ENCODE measurements at regions of chr17 and their contacts with region 1.

Region 1: GRCh38 chr17:74736513-74737298 is at the start of gene RAB37:
- DNase-seq: no peak
- ATAC-seq: peak; percentile 67
- H3K4me3 ChIP-seq: peak within 1 kb of the TSS; percentile 69
- H3K27ac ChIP-seq: peak within 1 kb of the TSS; percentile 47
- H3K4me1 ChIP-seq: peaks cover 32% of the 10 kb centered on the region
- H3K27me3 ChIP-seq: no peaks in the 10 kb centered on the region
- CTCF ChIP-seq: peak; percentile 64 to 76 (median 67); a peak in 5 of 6 replicates
- EP300 ChIP-seq: no peak
- POLR2A ChIP-seq: peak; percentile 31; the same call in 1 of the 2 replicates
- RAD21 ChIP-seq: peak; percentile 76
- polyA plus RNA-seq, gene RAB37: 0.48 to 0.97 TPM

Region 2: DNA sequence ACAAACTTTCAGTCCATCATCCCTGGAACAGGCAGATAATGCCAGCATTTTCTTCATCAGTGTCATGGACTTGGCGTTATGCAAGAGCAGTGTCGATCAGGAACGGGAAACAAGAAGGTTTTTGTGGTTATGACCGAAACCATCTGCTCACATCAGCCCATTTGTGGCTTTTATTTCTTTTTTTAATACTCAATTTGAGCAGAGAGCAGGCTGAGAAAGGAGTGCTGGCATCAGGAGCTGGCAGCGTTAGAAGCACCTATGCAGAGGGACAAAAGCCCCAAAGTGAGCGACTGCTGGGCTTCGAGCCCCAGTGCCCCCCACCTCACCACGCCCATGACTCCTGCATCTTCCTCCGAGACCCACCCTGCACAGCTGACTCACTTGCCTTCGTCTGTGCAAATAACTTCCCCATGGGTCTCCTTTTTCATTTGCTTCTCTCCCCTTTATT is 97.0 kb before region 1 on chr17:
- CTCF ChIA-PET with region 1: interaction called, 10 read pairs
- POLR2A ChIA-PET with region 1: interaction called, 6 read pairs
- RAD21 ChIA-PET with region 1: interaction called, 10 read pairs
- SMC1A ChIA-PET with region 1: interaction called, 5 read pairs
- in situ Hi-C with region 1: no loop called
- intact Hi-C with region 1: no loop called
- DNase-seq: peak; percentile 42
- ATAC-seq: peak; percentile 58
- H3K4me3 ChIP-seq: no peak overlapping the region
- H3K27ac ChIP-seq: no peak overlapping the region
- H3K4me1 ChIP-seq: peaks cover 35% of the 10 kb centered on the region
- H3K27me3 ChIP-seq: peaks cover 0 to 2% of the 10 kb centered on the region in 2 experiments; a peak in 2 of 4 replicates
- CTCF ChIP-seq: no peak
- EP300 ChIP-seq: no peak
- POLR2A ChIP-seq: no peak
- RAD21 ChIP-seq: no peak

Region 3: DNA sequence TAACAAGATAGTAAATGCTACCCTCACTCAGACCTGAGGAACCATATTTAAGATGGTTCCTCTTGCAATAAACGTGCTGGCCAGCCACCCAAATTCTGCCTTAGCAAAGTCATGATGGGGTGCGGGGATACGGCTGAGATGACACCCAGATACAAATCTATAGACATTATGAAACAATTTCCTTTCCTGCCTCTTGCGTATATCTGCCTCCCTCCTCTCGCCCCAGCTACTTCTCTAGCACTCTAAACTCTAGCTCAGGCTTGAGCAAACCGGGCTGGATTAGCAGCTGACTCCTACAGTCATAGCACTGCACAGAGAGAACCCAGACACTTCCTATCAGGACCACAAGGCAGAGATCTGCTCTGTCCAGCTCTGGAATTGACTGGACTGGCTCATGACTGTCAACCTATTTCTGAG is 46.3 kb before region 1 on chr17:
- CTCF ChIA-PET with region 1: interaction called, 61 read pairs
- POLR2A ChIA-PET with region 1: interaction called, 5 read pairs
- RAD21 ChIA-PET with region 1: interaction called, 25 read pairs
- SMC1A ChIA-PET with region 1: interaction called, 39 read pairs
- in situ Hi-C with region 1: no loop called
- intact Hi-C with region 1: loop called (anchors 5 kb)
- DNase-seq: no peak
- ATAC-seq: no peak
- H3K4me3 ChIP-seq: no peak overlapping the region
- H3K27ac ChIP-seq: no peak overlapping the region
- H3K4me1 ChIP-seq: peaks cover 21% of the 10 kb centered on the region
- H3K27me3 ChIP-seq: no peaks in the 10 kb centered on the region; a peak in 1 of 4 replicates
- CTCF ChIP-seq: no peak
- EP300 ChIP-seq: no peak
- POLR2A ChIP-seq: no peak
- RAD21 ChIP-seq: no peak

Region 4: DNA sequence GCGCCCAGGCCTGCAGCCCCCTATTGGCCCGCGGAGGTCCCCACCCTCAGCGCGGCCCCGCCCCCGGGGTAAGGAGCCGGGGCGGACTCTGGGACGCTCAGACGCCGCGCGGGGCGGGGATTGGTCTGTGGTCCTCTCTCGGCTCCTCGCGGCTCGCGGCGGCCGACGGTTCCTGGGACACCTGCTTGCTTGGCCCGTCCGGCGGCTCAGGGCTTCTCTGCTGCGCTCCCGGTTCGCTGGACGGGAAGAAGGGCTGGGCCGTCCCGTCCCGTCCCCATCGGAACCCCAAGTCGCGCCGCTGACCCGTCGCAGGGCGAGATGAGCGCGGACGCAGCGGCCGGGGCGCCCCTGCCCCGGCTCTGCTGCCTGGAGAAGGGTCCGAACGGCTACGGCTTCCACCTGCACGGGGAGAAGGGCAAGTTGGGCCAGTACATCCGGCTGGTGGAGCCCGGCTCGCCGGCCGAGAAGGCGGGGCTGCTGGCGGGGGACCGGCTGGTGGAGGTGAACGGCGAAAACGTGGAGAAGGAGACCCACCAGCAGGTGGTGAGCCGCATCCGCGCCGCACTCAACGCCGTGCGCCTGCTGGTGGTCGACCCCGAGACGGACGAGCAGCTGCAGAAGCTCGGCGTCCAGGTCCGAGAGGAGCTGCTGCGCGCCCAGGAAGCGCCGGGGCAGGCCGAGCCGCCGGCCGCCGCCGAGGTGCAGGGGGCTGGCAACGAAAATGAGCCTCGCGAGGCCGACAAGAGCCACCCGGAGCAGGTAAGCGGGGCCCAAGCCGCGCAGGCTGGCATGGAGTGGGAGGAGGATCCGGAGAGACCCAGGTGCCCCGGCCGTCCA is 12.0 kb after region 1 on chr17 and contains the start of gene NHERF1:
- CTCF ChIA-PET with region 1: interaction called, 43 read pairs
- POLR2A ChIA-PET with region 1: interaction called, 22 read pairs
- RAD21 ChIA-PET with region 1: interaction called, 11 read pairs
- SMC1A ChIA-PET with region 1: interaction called, 15 read pairs
- in situ Hi-C with region 1: no loop called
- intact Hi-C with region 1: no loop called
- DNase-seq: peak; percentile 60
- ATAC-seq: peak; percentile 96
- H3K4me3 ChIP-seq: peak within 1 kb of the TSS; percentile 96
- H3K27ac ChIP-seq: peak within 1 kb of the TSS; percentile 64
- H3K4me1 ChIP-seq: peaks cover 6% of the 10 kb centered on the region
- H3K27me3 ChIP-seq: no peaks in the 10 kb centered on the region
- CTCF ChIP-seq: peak; percentile 10 to 19 (median 14); a peak in 1 of 6 replicates
- EP300 ChIP-seq: no peak
- POLR2A ChIP-seq: peak; percentile 99
- RAD21 ChIP-seq: no peak
- polyA plus RNA-seq, gene NHERF1: 13.4 to 14.3 TPM

Region 5: GRCh38 chr17:74790161-74791054 is 53.7 kb after region 1 on chr17:
- CTCF ChIA-PET with region 1: interaction called, 11 read pairs
- POLR2A ChIA-PET with region 1: interaction called, 5 read pairs
- RAD21 ChIA-PET with region 1: interaction called, 4 read pairs
- SMC1A ChIA-PET with region 1: interaction called, 8 read pairs
- in situ Hi-C with region 1: no loop called
- intact Hi-C with region 1: no loop called
- DNase-seq: no peak
- ATAC-seq: no peak
- H3K4me3 ChIP-seq: no peak overlapping the region
- H3K27ac ChIP-seq: no peak overlapping the region
- H3K4me1 ChIP-seq: peaks cover 1% of the 10 kb centered on the region
- H3K27me3 ChIP-seq: no peaks in the 10 kb centered on the region
- CTCF ChIP-seq: no peak
- EP300 ChIP-seq: no peak
- POLR2A ChIP-seq: no peak
- RAD21 ChIP-seq: no peak

Measured in GM12878 (cell line).